ENCODE measurements at regions of chr2 and their contacts with region 1.

Region 1: GRCh38 chr2:72745679-72746368 is 80.0 kb downstream of the EXOC6B start:
- DNase-seq: peak; percentile 26
- H3K4me3 ChIP-seq: no peak overlapping the region
- H3K27ac ChIP-seq: no peak overlapping the region
- H3K4me1 ChIP-seq: no peaks in the 10 kb centered on the region
- H3K27me3 ChIP-seq: no peaks in the 10 kb centered on the region
- CTCF ChIP-seq: peak; percentile 17 to 74 (median 60)
- POLR2A ChIP-seq: no peak

Region 2: GRCh38 chr2:71545572-71546274 is 1200.1 kb before region 1 on chr2:
- intact Hi-C with region 1: loop called (anchors 5 kb)
- DNase-seq: peak; percentile 56
- H3K4me3 ChIP-seq: no peak overlapping the region
- H3K27ac ChIP-seq: no peak overlapping the region
- H3K4me1 ChIP-seq: no peaks in the 10 kb centered on the region
- H3K27me3 ChIP-seq: no peaks in the 10 kb centered on the region
- CTCF ChIP-seq: peak; percentile 22 to 74 (median 64)
- POLR2A ChIP-seq: no peak

Region 3: DNA sequence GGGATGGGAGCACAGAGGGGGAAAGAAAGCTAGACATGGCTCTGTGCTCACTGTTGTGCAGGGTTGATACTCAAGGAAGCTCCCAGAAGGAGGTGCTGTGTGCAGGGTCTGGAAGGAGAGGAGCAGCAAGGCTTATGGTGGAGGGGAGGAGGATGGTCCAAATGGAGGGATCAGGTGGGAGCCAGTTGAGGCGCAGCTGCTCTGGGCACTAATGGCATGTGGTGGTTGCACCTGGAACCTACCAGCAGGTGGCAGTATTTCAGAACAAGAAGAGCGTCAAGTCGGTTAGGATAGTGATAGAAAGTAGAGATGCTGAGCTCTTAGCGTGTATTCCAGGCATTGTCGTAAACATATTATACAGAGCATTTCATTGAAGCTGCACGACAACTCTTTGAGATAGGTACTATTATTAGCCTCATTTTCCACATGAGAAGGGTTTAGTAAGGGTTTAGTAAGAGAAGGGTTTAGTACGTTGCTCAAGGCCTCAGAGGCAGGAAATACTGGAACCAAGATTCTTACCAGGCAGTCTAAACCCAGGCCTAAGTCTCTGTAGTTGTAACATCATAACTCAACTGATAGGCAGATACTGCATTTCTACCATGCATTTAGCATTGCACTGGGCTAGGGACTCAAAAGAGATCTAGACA is 821.8 kb before region 1 on chr2:
- intact Hi-C with region 1: loop called (anchors 10 kb)
- DNase-seq: peak; percentile 69
- H3K4me3 ChIP-seq: no peak overlapping the region
- H3K27ac ChIP-seq: no peak overlapping the region
- H3K4me1 ChIP-seq: no peaks in the 10 kb centered on the region
- H3K27me3 ChIP-seq: no peaks in the 10 kb centered on the region
- CTCF ChIP-seq: peak; percentile 56 to 94 (median 82)
- POLR2A ChIP-seq: no peak

Region 4: GRCh38 chr2:72062336-72062735 is 683.5 kb before region 1 on chr2:
- intact Hi-C with region 1: no loop called
- DNase-seq: no peak
- H3K4me3 ChIP-seq: no peak overlapping the region
- H3K27ac ChIP-seq: no peak overlapping the region
- H3K4me1 ChIP-seq: no peaks in the 10 kb centered on the region
- H3K27me3 ChIP-seq: no peaks in the 10 kb centered on the region
- CTCF ChIP-seq: no peak
- POLR2A ChIP-seq: no peak

Region 5: DNA sequence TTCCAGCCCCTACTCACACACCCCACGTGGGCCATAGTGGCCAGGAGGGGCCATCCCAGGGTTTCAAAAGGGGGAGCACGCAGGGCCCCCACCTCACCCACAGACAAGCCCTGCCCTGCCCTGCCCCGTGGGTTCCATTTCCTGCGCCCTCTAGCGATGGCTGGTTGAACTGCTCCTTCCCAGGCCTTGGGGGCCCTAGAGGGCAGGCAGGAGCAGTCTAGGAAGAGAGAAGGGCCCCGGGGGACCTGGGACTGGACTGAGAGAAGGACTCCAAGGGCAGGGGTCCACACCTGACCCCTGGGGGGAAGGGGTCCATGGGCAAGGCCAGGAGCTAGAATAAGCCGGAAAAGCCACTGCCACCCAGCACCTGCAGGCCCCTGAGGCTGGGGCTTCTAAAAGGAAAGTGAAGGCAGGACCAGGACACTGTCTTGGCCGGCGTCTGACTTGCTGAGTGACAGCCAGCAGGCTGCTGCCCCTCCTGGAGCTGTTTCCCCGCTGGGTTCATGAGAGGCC is 608.3 kb before region 1 on chr2:
- intact Hi-C with region 1: loop called (anchors 10 kb)
- DNase-seq: no peak
- H3K4me3 ChIP-seq: no peak overlapping the region
- H3K27ac ChIP-seq: no peak overlapping the region
- H3K4me1 ChIP-seq: no peaks in the 10 kb centered on the region
- H3K27me3 ChIP-seq: no peaks in the 10 kb centered on the region
- CTCF ChIP-seq: peak; percentile 56 to 82 (median 64)
- POLR2A ChIP-seq: no peak

Region 6: GRCh38 chr2:72579591-72580180 is 166.1 kb before region 1 on chr2:
- intact Hi-C with region 1: loop called (anchors 10 kb)
- DNase-seq: no peak
- H3K4me3 ChIP-seq: no peak overlapping the region
- H3K27ac ChIP-seq: no peak overlapping the region
- H3K4me1 ChIP-seq: no peaks in the 10 kb centered on the region
- H3K27me3 ChIP-seq: no peaks in the 10 kb centered on the region
- CTCF ChIP-seq: peak; percentile 28 to 73 (median 64)
- POLR2A ChIP-seq: no peak

Measured in prostate gland (tissue), 2 donors.